Right ventricle myocardium superior (tissue), 1 donor: ENCODE measurements at regions of chr16 and their contacts with region 1.

Region 1: GRCh38 chr16:88941913-88942909 is 34.8 kb downstream of the CBFA2T3 start:
- DNase-seq: peak; percentile 76
- ATAC-seq: peak; percentile 54

Region 2: DNA sequence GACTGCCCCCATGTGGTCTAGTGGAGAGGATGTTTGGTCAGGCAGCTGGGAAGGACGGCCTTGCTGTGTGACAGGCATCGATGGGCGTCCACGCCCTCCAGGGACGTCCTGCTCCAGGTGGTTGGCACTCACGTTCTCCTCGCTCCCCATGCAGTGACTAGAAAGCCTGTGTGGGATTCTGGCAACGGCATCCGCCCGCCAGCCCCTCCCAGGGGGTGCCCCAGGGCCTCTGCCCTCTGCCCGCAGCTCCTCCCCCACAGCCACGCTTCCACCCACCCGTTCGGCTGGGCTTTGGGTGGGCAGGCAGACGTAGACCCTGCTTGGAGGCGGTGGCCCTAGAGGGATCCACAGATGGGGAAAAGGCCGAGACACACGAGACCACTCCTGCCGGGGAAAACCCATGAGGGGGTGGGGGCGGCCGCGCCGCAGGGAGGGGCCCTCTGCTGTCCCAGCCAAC is 308.5 kb before region 1 on chr16:
- intact Hi-C with region 1: no loop called
- DNase-seq: no peak
- ATAC-seq: peak; percentile 19

Region 3: GRCh38 chr16:88886845-88887521 is 55.2 kb before region 1 on chr16:
- intact Hi-C with region 1: loop called (anchors 10 kb)
- DNase-seq: peak; percentile 94
- ATAC-seq: peak; percentile 86

Region 4: GRCh38 chr16:89217388-89218191 is 275.4 kb after region 1 on chr16 and contains the start of gene ZNF778:
- intact Hi-C with region 1: loop called (anchors 2 kb)
- DNase-seq: peak; percentile 92
- ATAC-seq: peak; percentile 98
- total RNA-seq, gene ZNF778: 9.9 TPM